Sciatic nerve (tissue), 2 donors: ENCODE measurements at regions of chr17 and their contacts with region 1.

Region 1: GRCh38 chr17:40559954-40560591 is 5.2 kb downstream of the CCR7 start:
- DNase-seq: peak; percentile 93
- ATAC-seq: peak; percentile 89

Region 2: GRCh38 chr17:40303009-40303657 is 256.9 kb before region 1 on chr17:
- intact Hi-C with region 1: loop called (anchors 10 kb)
- DNase-seq: peak; percentile 63
- ATAC-seq: peak; percentile 66

Region 3: GRCh38 chr17:40433551-40434415 is 126.3 kb before region 1 on chr17:
- intact Hi-C with region 1: loop called (anchors 10 kb)
- DNase-seq: peak; percentile 54
- ATAC-seq: peak; percentile 51

Region 4: GRCh38 chr17:41474863-41475262 is 914.8 kb after region 1 on chr17:
- intact Hi-C with region 1: no loop called
- DNase-seq: no peak
- ATAC-seq: no peak